ENCODE measurements at regions of chr6 and their contacts with region 1.

Region 1: DNA sequence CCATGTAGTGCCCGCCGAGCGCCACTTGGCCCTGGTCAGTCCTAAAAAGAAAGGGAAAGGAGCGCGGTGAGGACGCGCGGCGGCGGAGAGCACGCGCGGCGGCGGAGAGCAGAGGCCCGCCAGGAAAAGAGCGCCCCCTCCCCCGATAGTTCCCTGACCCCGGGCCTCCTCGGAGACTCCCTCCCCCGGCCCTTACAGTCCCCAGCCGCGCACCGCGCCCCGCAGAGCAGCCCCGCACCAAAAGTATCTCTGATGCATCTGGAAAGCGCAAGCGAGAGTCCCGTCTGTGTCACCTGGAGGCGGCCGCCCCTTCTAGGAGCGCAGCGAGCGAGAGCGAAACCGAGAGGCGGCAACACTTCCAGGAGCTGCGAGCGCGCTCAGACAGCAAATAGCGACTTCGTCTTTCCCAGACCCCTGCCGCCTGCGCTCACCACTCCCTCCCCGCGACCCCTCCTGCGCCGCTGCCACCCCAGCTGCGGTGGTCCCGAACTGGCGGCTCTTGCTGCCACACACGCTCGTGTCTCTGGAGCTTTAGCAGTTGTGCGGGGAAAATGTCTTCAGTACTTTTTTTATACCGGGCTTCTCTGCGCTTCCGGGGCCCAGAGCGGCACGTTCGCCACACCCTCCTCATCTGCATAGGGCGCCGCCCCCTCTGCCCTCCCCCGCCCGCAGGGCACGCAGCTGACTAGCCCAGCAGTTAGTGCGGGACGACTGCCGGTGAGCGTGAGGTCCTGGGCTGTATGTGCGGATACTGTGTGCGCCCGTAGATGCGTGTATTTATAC is at the start of gene TENT5A:
- DNase-seq: peak; percentile 88
- ATAC-seq: peak; percentile 80
- H3K4me3 Mint-ChIP-seq: peak within 1 kb of the TSS; percentile 76
- H3K27ac Mint-ChIP-seq: peak within 1 kb of the TSS; percentile 76
- H3K4me1 Mint-ChIP-seq: peaks cover 29% of the 10 kb centered on the region
- H3K27me3 Mint-ChIP-seq: peaks cover 23% of the 10 kb centered on the region
- CTCF ChIP-seq: no peak
- total RNA-seq, gene TENT5A: 1.1 to 1.2 TPM

Region 2: GRCh38 chr6:80338201-80338836 is 1414.0 kb before region 1 on chr6:
- CTCF ChIA-PET with region 1: interaction called, 7 read pairs
- POLR2A ChIA-PET with region 1: no interaction called
- intact Hi-C with region 1: loop called (anchors 10 kb)
- DNase-seq: peak; percentile 87
- ATAC-seq: peak; percentile 87
- H3K4me3 Mint-ChIP-seq: no peak overlapping the region
- H3K27ac Mint-ChIP-seq: no peak overlapping the region
- H3K4me1 Mint-ChIP-seq: no peaks in the 10 kb centered on the region
- H3K27me3 Mint-ChIP-seq: no peaks in the 10 kb centered on the region
- CTCF ChIP-seq: peak; percentile 95

Region 3: DNA sequence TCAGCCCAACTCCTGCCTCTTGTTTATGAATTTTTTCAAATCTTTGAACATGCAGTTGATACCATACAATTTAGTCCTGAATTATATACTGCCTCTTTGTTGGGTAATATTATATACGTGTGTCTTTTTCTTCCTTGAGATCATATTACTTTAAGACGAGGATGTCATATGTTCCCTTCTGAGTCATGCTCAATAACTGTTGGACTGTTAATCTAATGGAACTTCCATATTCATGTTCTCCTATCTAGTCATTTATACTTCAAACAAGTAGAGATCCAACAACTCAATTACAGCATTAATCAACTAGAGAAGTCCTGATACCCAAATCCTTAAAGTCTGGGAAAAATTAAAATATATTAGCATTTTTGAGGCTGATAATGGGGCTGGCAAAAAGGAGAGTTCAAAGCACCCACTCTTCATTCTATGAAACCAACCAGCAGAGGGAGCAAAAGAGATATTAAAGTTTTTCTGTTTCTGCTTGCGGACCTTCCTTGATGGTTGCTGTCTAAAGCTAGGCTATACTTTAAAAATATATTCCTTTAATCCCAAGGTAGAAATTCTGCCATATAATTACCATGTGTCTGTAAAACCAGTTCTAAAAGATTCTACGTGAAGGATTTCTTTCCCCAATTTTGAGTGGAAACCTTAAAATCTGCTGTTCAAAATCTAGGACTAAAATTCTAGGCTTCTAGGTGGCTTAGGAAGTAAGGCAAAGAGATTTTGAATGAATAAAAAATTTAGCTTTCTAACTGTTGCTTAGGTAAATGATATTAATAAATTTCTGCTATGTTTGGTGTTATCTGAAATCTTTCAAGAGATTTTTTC is 1147.0 kb before region 1 on chr6:
- CTCF ChIA-PET with region 1: interaction called, 7 read pairs
- POLR2A ChIA-PET with region 1: no interaction called
- intact Hi-C with region 1: loop called (anchors 10 kb)
- DNase-seq: no peak
- ATAC-seq: no peak
- H3K4me3 Mint-ChIP-seq: no peak overlapping the region
- H3K27ac Mint-ChIP-seq: no peak overlapping the region
- H3K4me1 Mint-ChIP-seq: no peaks in the 10 kb centered on the region
- H3K27me3 Mint-ChIP-seq: peaks cover 13% of the 10 kb centered on the region
- CTCF ChIP-seq: peak; percentile 54

Region 4: GRCh38 chr6:81834141-81834681 is 81.9 kb after region 1 on chr6:
- CTCF ChIA-PET with region 1: no interaction called
- POLR2A ChIA-PET with region 1: no interaction called
- intact Hi-C with region 1: no loop called
- DNase-seq: no peak
- ATAC-seq: no peak
- H3K4me3 Mint-ChIP-seq: no peak overlapping the region
- H3K27ac Mint-ChIP-seq: no peak overlapping the region
- H3K4me1 Mint-ChIP-seq: no peaks in the 10 kb centered on the region
- H3K27me3 Mint-ChIP-seq: peaks cover 2% of the 10 kb centered on the region
- CTCF ChIP-seq: no peak